ENCODE measurements at regions of chr10 and their contacts with region 1.

Region 1: GRCh38 chr10:122648599-122649428 is 50.8 kb downstream of the C10orf120 start:
- DNase-seq: no peak
- ATAC-seq: peak; percentile 71
- H3K4me3 ChIP-seq: no peak overlapping the region
- H3K27ac ChIP-seq: no peak overlapping the region
- H3K4me1 ChIP-seq: no peaks in the 10 kb centered on the region
- H3K27me3 ChIP-seq: no peaks in the 10 kb centered on the region; a peak in 3 of 4 replicates
- CTCF ChIP-seq: peak; percentile 68 to 79 (median 76)
- EP300 ChIP-seq: no peak
- POLR2A ChIP-seq: no peak
- RAD21 ChIP-seq: peak; percentile 67

Region 2: DNA sequence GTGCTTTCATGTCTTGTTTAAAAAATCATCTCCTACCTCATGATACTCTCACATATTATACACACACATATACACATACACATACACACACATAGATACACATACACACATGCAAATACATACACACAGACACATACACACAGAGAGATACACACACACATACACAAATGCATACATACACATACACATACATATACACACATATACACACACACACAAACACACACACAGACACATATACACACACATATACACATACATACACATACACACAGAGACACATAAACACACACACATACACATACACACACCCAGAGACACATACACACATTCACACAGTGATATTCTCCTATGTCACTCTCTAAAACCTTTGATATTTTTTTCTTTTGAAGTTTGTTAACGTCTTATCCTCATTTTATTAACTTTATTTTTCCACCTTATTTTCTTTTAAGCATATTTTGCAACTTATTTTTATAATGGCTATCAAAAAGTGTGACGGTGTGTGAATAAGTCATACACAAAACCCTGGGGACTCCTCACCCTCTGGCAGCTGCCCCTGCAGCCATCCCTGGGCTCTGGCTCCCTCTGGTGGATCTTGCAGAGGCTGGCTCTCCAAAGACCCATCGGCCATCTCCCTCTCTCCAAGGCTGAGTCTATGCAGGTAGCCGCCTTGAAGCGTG is 54.8 kb after region 1 on chr10:
- CTCF ChIA-PET with region 1: interaction called, 15 read pairs
- POLR2A ChIA-PET with region 1: no interaction called
- RAD21 ChIA-PET with region 1: interaction called, 5 read pairs
- SMC1A ChIA-PET with region 1: interaction called, 8 read pairs
- in situ Hi-C with region 1: no loop called
- intact Hi-C with region 1: loop called (anchors 1 kb)
- DNase-seq: no peak
- ATAC-seq: peak; percentile 98
- H3K4me3 ChIP-seq: no peak overlapping the region
- H3K27ac ChIP-seq: no peak overlapping the region
- H3K4me1 ChIP-seq: no peaks in the 10 kb centered on the region
- H3K27me3 ChIP-seq: no peaks in the 10 kb centered on the region; a peak in 1 of 4 replicates
- CTCF ChIP-seq: peak; percentile 82 to 89 (median 87)
- EP300 ChIP-seq: no peak
- POLR2A ChIP-seq: no peak
- RAD21 ChIP-seq: peak; percentile 83

Measured in GM12878 (cell line).